Naive thymus-derived CD4-positive, alpha-beta T cell (primary cell): ENCODE measurements at regions of chr10 and their contacts with region 1.

Region 1: DNA sequence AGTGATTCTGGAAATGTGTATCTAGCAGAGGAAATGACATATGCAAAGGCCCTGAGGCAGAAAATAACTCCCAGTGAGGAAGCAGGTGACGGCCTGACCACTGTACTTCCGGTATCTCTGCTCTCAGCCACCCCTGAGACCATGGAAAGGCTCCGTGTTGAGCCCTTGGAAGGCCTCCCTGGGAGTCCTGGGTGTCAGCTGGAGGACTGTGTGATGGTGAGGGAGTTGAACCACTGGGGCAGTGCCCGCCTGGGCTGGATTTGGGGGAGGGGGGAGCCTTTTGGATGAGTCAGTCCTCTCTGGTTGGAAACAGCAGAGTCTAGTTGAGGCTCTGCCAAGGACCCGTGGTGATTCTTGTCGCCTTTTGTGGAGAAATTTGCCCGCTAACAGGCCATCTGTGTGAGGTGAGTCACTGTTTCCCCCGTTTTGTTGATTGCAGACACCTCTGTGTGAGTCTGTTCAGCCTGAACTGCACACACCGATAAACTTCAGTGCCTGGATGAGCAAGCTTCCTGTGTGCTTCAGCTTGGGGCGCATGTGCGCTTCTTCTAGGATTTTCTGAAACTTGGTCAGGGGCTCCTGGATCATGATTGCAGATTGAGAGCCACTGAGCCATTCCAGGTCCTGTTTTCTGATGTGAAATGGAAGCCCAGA is 98.6 kb downstream of the GRK5 start:
- DNase-seq: peak; percentile 38 to 93 (median 70)
- ATAC-seq: peak; percentile 85
- H3K4me3 ChIP-seq: peak overlapping the region; percentile 65
- H3K4me3 Mint-ChIP-seq: peak overlapping the region; percentile 71 to 93 (median 90)
- H3K27ac ChIP-seq: peak overlapping the region; percentile 90
- H3K27ac Mint-ChIP-seq: peak overlapping the region; percentile 94 to 99 (median 97)
- H3K4me1 ChIP-seq: peaks cover 47 to 53% of the 10 kb centered on the region in 2 donors
- H3K4me1 Mint-ChIP-seq: peaks cover 50 to 87% (median 74%) of the 10 kb centered on the region in 7 donors
- H3K27me3 ChIP-seq: no peaks in the 10 kb centered on the region
- H3K27me3 Mint-ChIP-seq: peaks cover 0 to 2% (median 0%) of the 10 kb centered on the region in 5 donors

Region 2: GRCh38 chr10:119131512-119132240 is 174.3 kb before region 1 on chr10:
- CTCF ChIA-PET with region 1: no interaction called
- POLR2A ChIA-PET with region 1: no interaction called
- intact Hi-C with region 1: loop called in 1 of 2 experiments (anchors 2 kb)
- DNase-seq: peak in 8 of 9 donors; percentile 24 to 61 (median 40)
- ATAC-seq: peak; percentile 77
- H3K4me3 ChIP-seq: peak overlapping the region; percentile 73
- H3K4me3 Mint-ChIP-seq: peak overlapping the region; percentile 81 to 96 (median 91)
- H3K27ac ChIP-seq: peak overlapping the region; percentile 66
- H3K27ac Mint-ChIP-seq: peak overlapping the region; percentile 92 to 97 (median 95)
- H3K4me1 ChIP-seq: peaks cover 8 to 16% of the 10 kb centered on the region in 2 donors
- H3K4me1 Mint-ChIP-seq: peaks cover 16 to 59% (median 32%) of the 10 kb centered on the region in 7 donors
- H3K27me3 ChIP-seq: no peaks in the 10 kb centered on the region
- H3K27me3 Mint-ChIP-seq: no peaks in the 10 kb centered on the region

Region 3: DNA sequence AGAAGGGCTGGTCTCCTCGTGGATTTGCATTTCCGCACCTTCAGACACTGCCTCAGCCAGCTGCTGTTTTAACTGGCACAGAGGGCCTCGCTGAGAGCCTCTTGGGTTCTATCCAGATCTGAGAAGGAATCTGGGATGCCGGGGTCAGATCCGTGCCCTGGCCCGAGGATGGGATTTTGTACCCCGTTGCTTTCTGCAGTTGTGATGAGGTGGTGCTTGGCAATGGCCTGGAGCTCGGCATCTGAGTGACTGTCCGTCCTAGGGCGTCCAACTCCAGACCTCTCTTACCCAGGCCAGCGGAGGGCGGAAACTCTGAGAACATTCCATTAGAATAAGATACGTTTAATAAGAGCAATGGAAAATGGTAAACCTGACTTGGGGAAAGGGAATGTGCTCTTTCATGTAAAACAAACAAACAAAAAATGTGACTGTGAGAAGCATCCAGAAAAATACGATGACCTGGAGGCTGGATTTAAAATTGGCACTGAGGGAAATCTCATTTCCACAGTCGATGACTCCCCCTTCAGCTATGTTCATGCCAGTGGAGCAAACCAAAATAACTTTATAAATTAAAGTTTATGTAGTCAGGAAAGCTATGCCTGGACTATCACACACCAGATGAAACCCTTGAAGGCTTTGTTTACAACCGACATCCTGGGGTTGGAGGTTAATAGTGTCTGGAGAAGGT is 59.0 kb before region 1 on chr10:
- CTCF ChIA-PET with region 1: no interaction called
- POLR2A ChIA-PET with region 1: interaction called, 4 read pairs
- intact Hi-C with region 1: loop called in 1 of 2 experiments (anchors 2 kb)
- DNase-seq: no peak
- ATAC-seq: no peak
- H3K4me3 ChIP-seq: no peak overlapping the region
- H3K4me3 Mint-ChIP-seq: no peak overlapping the region
- H3K27ac ChIP-seq: no peak overlapping the region
- H3K27ac Mint-ChIP-seq: peak overlapping the region in 2 of 9 donors; percentile 17 to 21
- H3K4me1 ChIP-seq: no peaks in the 10 kb centered on the region
- H3K4me1 Mint-ChIP-seq: peaks cover 11 to 49% (median 34%) of the 10 kb centered on the region in 7 donors
- H3K27me3 ChIP-seq: no peaks in the 10 kb centered on the region
- H3K27me3 Mint-ChIP-seq: no peaks in the 10 kb centered on the region

Region 4: GRCh38 chr10:119416855-119417254 is 110.9 kb after region 1 on chr10:
- CTCF ChIA-PET with region 1: interaction called, 4 read pairs
- POLR2A ChIA-PET with region 1: no interaction called
- intact Hi-C with region 1: loop called (anchors 1 to 2 kb)
- DNase-seq: peak; percentile 44 to 69 (median 62)
- ATAC-seq: peak; percentile 89
- H3K4me3 ChIP-seq: no peak overlapping the region
- H3K4me3 Mint-ChIP-seq: no peak overlapping the region
- H3K27ac ChIP-seq: no peak overlapping the region
- H3K27ac Mint-ChIP-seq: no peak overlapping the region
- H3K4me1 ChIP-seq: no peaks in the 10 kb centered on the region
- H3K4me1 Mint-ChIP-seq: peaks cover 0 to 5% (median 0%) of the 10 kb centered on the region in 7 donors
- H3K27me3 ChIP-seq: no peaks in the 10 kb centered on the region
- H3K27me3 Mint-ChIP-seq: no peaks in the 10 kb centered on the region

Region 5: GRCh38 chr10:119596537-119597404 is 290.8 kb after region 1 on chr10 and contains the start of gene TIAL1:
- CTCF ChIA-PET with region 1: no interaction called
- POLR2A ChIA-PET with region 1: no interaction called
- intact Hi-C with region 1: loop called (anchors 1 to 5 kb)
- DNase-seq: peak; percentile 73 to 95 (median 89)
- ATAC-seq: peak; percentile 88
- H3K4me3 ChIP-seq: peak within 1 kb of the TSS; percentile 96
- H3K4me3 Mint-ChIP-seq: peak within 1 kb of the TSS; percentile 85 to 99 (median 96)
- H3K27ac ChIP-seq: peak within 1 kb of the TSS; percentile 98
- H3K27ac Mint-ChIP-seq: peak within 1 kb of the TSS; percentile 90 to 99 (median 96)
- H3K4me1 ChIP-seq: peaks cover 28 to 38% of the 10 kb centered on the region in 2 donors
- H3K4me1 Mint-ChIP-seq: peaks cover 35 to 56% (median 48%) of the 10 kb centered on the region in 7 donors
- H3K27me3 ChIP-seq: no peaks in the 10 kb centered on the region
- H3K27me3 Mint-ChIP-seq: no peaks in the 10 kb centered on the region
- total RNA-seq, gene TIAL1: 166 to 228 (median 176) TPM